Endothelial cell of umbilical vein (primary cell): ENCODE measurements at regions of chr2 and their contacts with region 1.

Region 1: GRCh38 chr2:178522950-178523595 is 42.8 kb downstream of the PLEKHA3 start:
- DNase-seq: peak; percentile 83
- H3K4me3 ChIP-seq: peak overlapping the region; percentile 17 to 77 (median 39)
- H3K27ac ChIP-seq: peak overlapping the region; percentile 36
- H3K4me1 ChIP-seq: peaks cover 4% of the 10 kb centered on the region
- H3K27me3 ChIP-seq: no peaks in the 10 kb centered on the region
- CTCF ChIP-seq: peak; percentile 79 to 85
- POLR2A ChIP-seq: peak; percentile 73

Region 2: DNA sequence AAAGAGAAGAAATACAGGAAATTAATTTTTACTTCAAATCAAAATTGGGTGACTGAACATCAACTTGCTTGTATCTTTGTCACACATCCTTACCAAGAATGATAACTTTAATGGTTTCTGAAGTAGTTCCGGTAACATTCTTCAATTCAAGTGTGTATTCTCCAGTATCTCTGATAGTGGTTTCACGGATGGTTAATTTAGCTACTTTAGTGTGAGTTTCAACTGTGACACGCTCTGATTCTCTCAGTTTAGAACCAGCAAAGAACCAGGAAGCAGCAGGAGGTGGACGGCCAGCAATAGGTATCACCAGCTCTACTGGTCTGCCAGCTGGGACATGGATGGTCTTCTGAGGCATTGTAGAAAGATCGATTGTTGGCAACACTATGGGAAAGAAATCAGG is 19.5 kb after region 1 on chr2:
- CTCF ChIA-PET with region 1: interaction called, 5 read pairs
- POLR2A ChIA-PET with region 1: no interaction called
- dilution Hi-C with region 1: no loop called
- intact Hi-C with region 1: loop called (anchors 2 kb)
- DNase-seq: no peak
- H3K4me3 ChIP-seq: no peak overlapping the region
- H3K27ac ChIP-seq: no peak overlapping the region
- H3K4me1 ChIP-seq: peaks cover 9% of the 10 kb centered on the region
- H3K27me3 ChIP-seq: no peaks in the 10 kb centered on the region
- CTCF ChIP-seq: no peak
- POLR2A ChIP-seq: no peak